ENCODE measurements at regions of chr3 and their contacts with region 1.

Region 1: DNA sequence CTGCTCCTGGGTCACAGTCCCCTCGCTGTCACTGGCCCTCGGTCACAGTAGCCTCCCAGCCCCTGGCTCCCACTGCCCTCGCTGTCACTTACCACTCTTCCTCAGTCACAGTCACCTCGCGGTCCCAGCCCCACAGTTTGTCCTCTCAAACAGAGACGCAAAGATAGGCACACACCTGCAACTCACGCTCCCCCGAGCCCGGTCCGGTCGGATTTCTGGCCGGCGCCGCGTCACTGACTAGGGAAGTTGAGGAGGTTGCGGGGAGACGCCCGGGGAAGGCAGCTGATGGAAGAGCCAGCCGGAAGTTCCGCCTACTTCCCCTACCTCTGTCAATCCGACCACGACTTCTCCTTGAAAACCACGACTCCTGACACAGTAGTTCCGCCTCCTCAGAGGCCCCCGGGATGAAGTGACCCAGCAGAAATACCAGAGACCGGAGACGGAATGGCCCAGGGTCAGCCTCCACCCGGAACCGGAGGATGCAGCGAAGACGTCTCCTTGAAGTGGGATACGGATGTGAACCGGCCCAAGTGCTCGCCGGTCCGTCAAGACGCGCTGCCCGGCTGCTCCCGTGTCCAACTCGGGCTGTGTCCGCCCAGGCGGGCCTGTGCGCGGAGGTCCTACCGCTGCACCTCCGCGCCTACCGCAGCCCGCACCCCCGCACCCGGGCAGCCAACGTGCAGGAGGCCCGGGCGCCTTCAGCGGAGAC is at the start of gene PCYT1A:
- DNase-seq: peak; percentile 87
- ATAC-seq: peak; percentile 78
- H3K4me3 ChIP-seq: peak within 1 kb of the TSS; percentile 68 to 98 (median 96)
- H3K4me3 Mint-ChIP-seq: peak within 1 kb of the TSS; percentile 100
- H3K27ac ChIP-seq: peak within 1 kb of the TSS; percentile 70 to 92
- H3K27ac Mint-ChIP-seq: peak within 1 kb of the TSS; percentile 98
- H3K4me1 ChIP-seq: peaks cover 17 to 36% of the 10 kb centered on the region in 2 donors
- H3K4me1 Mint-ChIP-seq: peaks cover 58% of the 10 kb centered on the region
- H3K27me3 ChIP-seq: no peaks in the 10 kb centered on the region
- H3K27me3 Mint-ChIP-seq: no peaks in the 10 kb centered on the region
- CTCF ChIP-seq: no peak
- total RNA-seq, gene PCYT1A: 59.9 and 61.2 TPM in 2 replicates

Region 2: GRCh38 chr3:196274585-196274984 is 13.0 kb before region 1 on chr3:
- CTCF ChIA-PET with region 1: no interaction called
- POLR2A ChIA-PET with region 1: no interaction called
- intact Hi-C with region 1: loop called (anchors 1 kb)
- DNase-seq: peak; percentile 54
- ATAC-seq: peak; percentile 81
- H3K4me3 ChIP-seq: peak overlapping the region in 2 of 5 experiments; percentile 6
- H3K4me3 Mint-ChIP-seq: peak overlapping the region; percentile 69
- H3K27ac ChIP-seq: peak overlapping the region; percentile 57 to 68
- H3K27ac Mint-ChIP-seq: peak overlapping the region; percentile 87
- H3K4me1 ChIP-seq: peaks cover 4 to 17% of the 10 kb centered on the region in 2 donors
- H3K4me1 Mint-ChIP-seq: peaks cover 24% of the 10 kb centered on the region
- H3K27me3 ChIP-seq: no peaks in the 10 kb centered on the region
- H3K27me3 Mint-ChIP-seq: no peaks in the 10 kb centered on the region
- CTCF ChIP-seq: no peak

Region 3: GRCh38 chr3:196609343-196609775 is 321.8 kb after region 1 on chr3:
- CTCF ChIA-PET with region 1: no interaction called
- POLR2A ChIA-PET with region 1: no interaction called
- intact Hi-C with region 1: no loop called
- DNase-seq: peak; percentile 93
- ATAC-seq: peak; percentile 92
- H3K4me3 ChIP-seq: peak overlapping the region in 2 of 5 experiments; percentile 5 to 11
- H3K4me3 Mint-ChIP-seq: peak overlapping the region; percentile 70
- H3K27ac ChIP-seq: peak overlapping the region in 1 of 2 donors; percentile 15
- H3K27ac Mint-ChIP-seq: peak overlapping the region; percentile 86
- H3K4me1 ChIP-seq: peaks cover 8 to 12% of the 10 kb centered on the region in 2 donors
- H3K4me1 Mint-ChIP-seq: peaks cover 15% of the 10 kb centered on the region
- H3K27me3 ChIP-seq: no peaks in the 10 kb centered on the region
- H3K27me3 Mint-ChIP-seq: no peaks in the 10 kb centered on the region
- CTCF ChIP-seq: peak; percentile 92

Measured in B cell (primary cell).